Activated CD8-positive, alpha-beta T cell treated with anti-CD3 and anti-CD28 coated beads for 36 hours (primary cell): ENCODE measurements at regions of chr5 and their contacts with region 1.

Region 1: DNA sequence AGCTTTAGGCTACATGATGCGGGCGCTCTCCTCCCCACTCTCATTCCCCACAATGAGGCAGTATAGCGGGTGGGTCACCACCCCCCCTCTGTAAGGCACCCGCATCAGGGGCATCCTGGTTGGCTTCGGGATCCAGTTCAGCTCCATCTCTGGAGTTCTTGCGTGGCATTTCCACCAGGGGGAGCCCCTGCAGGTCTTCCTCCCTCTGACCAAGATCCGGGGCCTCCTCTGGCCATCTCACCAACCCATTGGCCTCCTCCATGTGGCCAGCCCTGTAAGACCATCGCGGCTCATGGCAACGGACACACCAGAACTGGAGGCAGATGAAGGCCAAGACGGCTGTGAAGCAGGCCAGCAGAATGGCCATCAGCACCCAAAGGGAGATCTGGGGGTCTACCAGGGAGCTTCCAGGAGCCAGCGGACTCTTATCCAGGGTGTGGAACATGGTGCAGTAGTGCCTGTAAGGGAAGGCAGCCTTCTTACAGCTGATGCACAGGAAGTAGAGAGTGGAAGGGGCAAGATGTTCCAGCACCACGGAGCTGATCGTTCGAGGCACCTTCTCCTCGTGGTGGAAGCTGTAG is 77.0 kb downstream of the CYFIP2 start:
- DNase-seq: peak; percentile 46
- ATAC-seq: no peak
- H3K4me3 Mint-ChIP-seq: no peak overlapping the region
- H3K27ac Mint-ChIP-seq: peak overlapping the region; percentile 50
- H3K4me1 Mint-ChIP-seq: peaks cover 39% of the 10 kb centered on the region
- H3K27me3 Mint-ChIP-seq: no peaks in the 10 kb centered on the region
- CTCF ChIP-seq: peak; percentile 69

Region 2: DNA sequence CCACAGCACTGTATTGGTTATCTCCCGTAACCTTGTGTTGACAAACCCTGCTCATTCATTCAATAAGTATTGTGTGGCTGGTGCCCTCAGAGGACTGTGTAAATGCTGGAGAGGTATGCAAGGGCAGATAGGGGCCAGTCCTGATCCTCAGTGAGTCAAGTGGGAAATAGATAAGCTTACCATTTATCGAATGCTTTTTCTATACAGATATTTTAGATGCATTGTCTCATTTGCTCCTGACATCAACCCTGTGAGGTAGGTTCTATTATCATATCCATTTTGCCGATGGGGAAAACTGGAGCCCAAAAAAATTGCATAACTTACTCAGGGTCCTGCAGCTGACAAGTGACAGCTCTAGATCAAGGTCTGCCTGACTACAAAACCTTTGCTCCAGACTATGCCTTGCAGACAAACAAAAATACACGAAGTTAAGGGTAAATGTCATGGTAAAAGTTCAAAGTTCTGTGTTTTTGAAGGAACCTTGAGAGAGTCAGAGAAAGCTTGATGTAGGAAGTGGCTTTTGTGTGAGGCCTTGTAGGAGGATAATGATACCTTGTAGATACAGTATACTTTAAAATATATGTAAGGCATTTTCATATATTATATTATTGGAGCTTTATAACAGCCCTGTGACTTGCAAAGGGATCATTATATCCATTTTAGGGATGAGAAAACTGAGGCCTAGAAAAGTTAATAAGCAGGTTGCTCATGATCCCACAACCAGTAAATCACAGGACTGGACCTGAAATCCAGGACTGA is 54.3 kb before region 1 on chr5:
- CTCF ChIA-PET with region 1: no interaction called
- POLR2A ChIA-PET with region 1: no interaction called
- intact Hi-C with region 1: no loop called
- DNase-seq: no peak
- ATAC-seq: no peak
- H3K4me3 Mint-ChIP-seq: no peak overlapping the region
- H3K27ac Mint-ChIP-seq: peak overlapping the region; percentile 69
- H3K4me1 Mint-ChIP-seq: peaks cover 83% of the 10 kb centered on the region
- H3K27me3 Mint-ChIP-seq: no peaks in the 10 kb centered on the region
- CTCF ChIP-seq: no peak

Region 3: DNA sequence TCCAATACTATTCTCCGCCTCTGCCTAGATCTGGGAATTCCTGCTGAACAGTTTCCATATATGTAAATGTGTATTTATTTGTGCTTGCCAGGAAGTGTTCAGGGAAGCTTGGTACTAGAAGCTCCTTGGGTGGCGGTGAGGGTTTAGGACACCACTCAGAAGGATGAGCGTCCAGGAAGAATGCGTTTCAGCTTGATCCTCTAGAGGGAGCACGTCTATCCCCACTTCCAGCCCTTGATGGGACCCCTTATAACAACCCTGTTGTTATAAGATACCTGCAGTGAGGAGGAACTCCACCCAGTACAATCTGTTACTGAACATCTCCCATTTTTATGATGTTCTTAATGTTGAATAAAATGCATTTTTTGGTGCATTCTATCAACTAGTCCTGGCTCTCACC is 11.9 kb after region 1 on chr5:
- CTCF ChIA-PET with region 1: interaction called, 47 read pairs
- POLR2A ChIA-PET with region 1: interaction called, 5 read pairs
- intact Hi-C with region 1: no loop called
- DNase-seq: no peak
- ATAC-seq: no peak
- H3K4me3 Mint-ChIP-seq: no peak overlapping the region
- H3K27ac Mint-ChIP-seq: no peak overlapping the region
- H3K4me1 Mint-ChIP-seq: peaks cover 37% of the 10 kb centered on the region
- H3K27me3 Mint-ChIP-seq: no peaks in the 10 kb centered on the region
- CTCF ChIP-seq: no peak

Region 4: GRCh38 chr5:157370967-157371366 is 28.1 kb after region 1 on chr5:
- CTCF ChIA-PET with region 1: interaction called, 15 read pairs
- POLR2A ChIA-PET with region 1: interaction called, 4 read pairs
- intact Hi-C with region 1: no loop called
- DNase-seq: no peak
- ATAC-seq: no peak
- H3K4me3 Mint-ChIP-seq: no peak overlapping the region
- H3K27ac Mint-ChIP-seq: peak overlapping the region; percentile 79
- H3K4me1 Mint-ChIP-seq: peaks cover 13% of the 10 kb centered on the region
- H3K27me3 Mint-ChIP-seq: no peaks in the 10 kb centered on the region
- CTCF ChIP-seq: no peak

Region 5: GRCh38 chr5:157471709-157472108 is 128.8 kb after region 1 on chr5:
- CTCF ChIA-PET with region 1: interaction called, 30 read pairs
- POLR2A ChIA-PET with region 1: no interaction called
- intact Hi-C with region 1: no loop called
- DNase-seq: peak; percentile 48
- ATAC-seq: peak; percentile 69
- H3K4me3 Mint-ChIP-seq: no peak overlapping the region
- H3K27ac Mint-ChIP-seq: no peak overlapping the region
- H3K4me1 Mint-ChIP-seq: no peaks in the 10 kb centered on the region
- H3K27me3 Mint-ChIP-seq: no peaks in the 10 kb centered on the region
- CTCF ChIP-seq: peak; percentile 55